HAP-1 (cell line): ENCODE measurements at regions of chrX and their contacts with region 1.

Region 1: DNA sequence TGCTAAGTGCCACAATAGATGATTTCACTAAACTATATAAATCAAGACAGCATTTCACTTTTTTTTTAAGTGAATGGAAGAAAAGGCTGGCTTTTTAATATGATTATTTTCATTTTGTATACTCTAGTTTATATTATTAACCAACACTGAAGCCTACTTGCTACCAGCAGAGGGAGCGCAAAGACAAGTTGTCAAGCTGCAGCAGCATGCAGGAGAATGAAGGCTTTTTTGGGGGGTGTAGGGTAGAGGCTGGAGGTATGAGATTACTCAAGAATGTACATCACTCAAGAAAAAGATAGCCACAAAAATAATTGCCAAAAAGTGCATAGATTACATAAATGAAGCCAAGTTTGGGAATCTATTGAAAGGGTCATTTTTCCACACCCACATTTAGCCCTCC is 519.5 kb downstream of the FGF13 start:
- DNase-seq: peak; percentile 38 to 63
- H3K4me3 ChIP-seq: no peak overlapping the region
- H3K4me1 ChIP-seq: no peaks in the 10 kb centered on the region
- H3K27me3 ChIP-seq: peaks cover 5% of the 10 kb centered on the region; the same call in 1 of the 2 replicates

Region 2: DNA sequence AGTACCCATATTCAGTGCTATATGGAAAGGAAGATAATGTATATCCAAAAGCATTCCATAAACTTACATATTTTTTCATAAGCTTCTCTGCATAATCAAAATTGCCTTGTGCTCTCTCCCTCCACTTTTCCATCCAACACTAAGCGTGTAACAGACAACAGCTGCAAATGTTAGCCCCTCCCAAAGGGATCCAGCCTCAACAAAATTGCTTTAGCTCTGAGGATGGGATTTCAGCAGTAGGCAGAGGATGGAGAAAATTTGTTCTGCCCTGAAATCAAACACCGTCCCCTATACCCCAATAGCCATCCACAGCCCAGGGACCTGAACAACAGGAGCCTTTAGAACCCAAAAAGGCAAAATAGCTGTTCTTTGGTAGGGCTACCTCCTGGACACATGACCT is 548.3 kb after region 1 on chrX:
- in situ Hi-C with region 1: loop called (anchors 5 kb)
- DNase-seq: no peak
- H3K4me3 ChIP-seq: no peak overlapping the region
- H3K4me1 ChIP-seq: no peaks in the 10 kb centered on the region
- H3K27me3 ChIP-seq: peaks cover 7% of the 10 kb centered on the region; the same call in 1 of the 2 replicates